H1 (cell line): ENCODE measurements at regions of chr11 and their contacts with region 1.

Region 1: GRCh38 chr11:34492806-34493414 is 20.7 kb downstream of the ELF5 start:
- DNase-seq: peak; percentile 7 to 65
- H3K4me3 ChIP-seq: no peak overlapping the region
- H3K27ac ChIP-seq: no peak overlapping the region
- H3K4me1 ChIP-seq: no peaks in the 10 kb centered on the region
- H3K27me3 ChIP-seq: no peaks in the 10 kb centered on the region
- CTCF ChIP-seq: peak in 2 of 3 experiments; percentile 52 to 67; a peak in 3 of 4 replicates
- EP300 ChIP-seq: no peak
- POLR2A ChIP-seq: no peak
- RAD21 ChIP-seq: peak; percentile 67 to 74

Region 2: GRCh38 chr11:34149786-34150185 is 343.1 kb before region 1 on chr11:
- CTCF ChIA-PET with region 1: interaction called, 16 read pairs
- POLR2A ChIA-PET with region 1: no interaction called
- DNase-seq: peak in 1 of 2 experiments; percentile 59
- H3K4me3 ChIP-seq: no peak overlapping the region
- H3K27ac ChIP-seq: no peak overlapping the region
- H3K4me1 ChIP-seq: no peaks in the 10 kb centered on the region
- H3K27me3 ChIP-seq: no peaks in the 10 kb centered on the region
- CTCF ChIP-seq: peak; percentile 61 to 70 (median 65)
- EP300 ChIP-seq: no peak
- POLR2A ChIP-seq: no peak
- RAD21 ChIP-seq: peak; percentile 67 to 77

Region 3: GRCh38 chr11:34288492-34288891 is 204.4 kb before region 1 on chr11:
- CTCF ChIA-PET with region 1: no interaction called
- POLR2A ChIA-PET with region 1: no interaction called
- DNase-seq: no peak
- H3K4me3 ChIP-seq: no peak overlapping the region
- H3K27ac ChIP-seq: no peak overlapping the region
- H3K4me1 ChIP-seq: no peaks in the 10 kb centered on the region
- H3K27me3 ChIP-seq: no peaks in the 10 kb centered on the region
- CTCF ChIP-seq: no peak
- EP300 ChIP-seq: no peak
- POLR2A ChIP-seq: no peak
- RAD21 ChIP-seq: no peak

Region 4: DNA sequence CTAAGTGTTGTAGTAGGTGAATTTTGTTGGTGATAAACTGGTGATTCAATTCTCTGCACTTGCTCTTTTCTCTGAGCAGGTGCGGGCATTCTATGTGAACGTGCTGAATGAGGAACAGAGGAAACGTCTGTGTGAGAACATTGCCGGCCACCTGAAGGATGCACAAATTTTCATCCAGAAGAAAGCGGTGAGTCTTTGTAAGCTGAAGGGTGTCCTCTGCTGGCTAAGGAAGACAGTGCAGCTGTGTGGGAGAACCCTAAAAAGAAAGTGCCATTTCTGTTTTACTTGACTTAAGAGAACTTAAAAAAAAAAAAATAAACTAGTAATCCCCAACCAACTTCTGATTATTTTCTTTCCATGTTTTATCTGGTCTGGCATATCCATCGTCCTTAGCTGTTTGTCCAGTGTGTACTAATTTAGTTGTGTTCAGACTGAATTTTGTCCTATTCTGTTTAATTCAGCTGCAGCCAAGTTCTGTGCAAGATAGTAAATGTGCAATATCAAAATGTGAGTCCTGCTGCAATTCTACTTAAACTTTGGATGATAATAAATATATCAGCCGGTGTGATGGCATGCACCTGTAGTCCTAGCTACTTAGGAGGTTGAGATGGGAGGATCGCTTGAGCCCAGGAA is 24.6 kb before region 1 on chr11:
- CTCF ChIA-PET with region 1: interaction called, 10 read pairs
- POLR2A ChIA-PET with region 1: no interaction called
- DNase-seq: peak; percentile 7 to 57
- H3K4me3 ChIP-seq: no peak overlapping the region
- H3K27ac ChIP-seq: no peak overlapping the region
- H3K4me1 ChIP-seq: no peaks in the 10 kb centered on the region
- H3K27me3 ChIP-seq: no peaks in the 10 kb centered on the region
- CTCF ChIP-seq: peak; percentile 2 to 74 (median 68)
- EP300 ChIP-seq: no peak
- POLR2A ChIP-seq: no peak
- RAD21 ChIP-seq: peak; percentile 77 to 79

Region 5: DNA sequence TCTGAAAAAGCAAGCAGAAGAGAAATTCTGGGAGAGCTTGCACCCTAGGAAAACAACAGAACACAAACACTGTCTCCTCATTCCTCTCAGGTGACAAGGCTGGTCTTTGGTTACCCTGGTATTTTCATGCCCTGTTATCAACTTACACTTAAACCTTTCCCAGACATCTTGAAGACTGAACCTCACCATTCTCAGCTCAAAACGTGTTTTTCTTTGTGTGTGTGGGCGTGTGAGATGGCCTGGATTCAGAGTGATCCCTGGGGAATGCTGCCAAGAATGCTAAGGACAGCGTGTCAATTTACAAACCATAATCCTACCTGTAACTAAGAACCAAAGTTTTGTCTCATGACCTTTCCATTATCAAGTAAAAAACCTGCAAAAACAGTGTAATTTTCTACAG is 12.6 kb before region 1 on chr11:
- CTCF ChIA-PET with region 1: interaction called, 24 read pairs
- POLR2A ChIA-PET with region 1: interaction called, 3 read pairs
- DNase-seq: no peak
- H3K4me3 ChIP-seq: no peak overlapping the region
- H3K27ac ChIP-seq: no peak overlapping the region
- H3K4me1 ChIP-seq: no peaks in the 10 kb centered on the region
- H3K27me3 ChIP-seq: no peaks in the 10 kb centered on the region
- CTCF ChIP-seq: no peak
- EP300 ChIP-seq: no peak
- POLR2A ChIP-seq: no peak
- RAD21 ChIP-seq: no peak